GM12878 (cell line): ENCODE measurements at regions of chr19 and their contacts with region 1.

Region 1: GRCh38 chr19:43749152-43749907 is 5.4 kb downstream of the SMG9 start:
- DNase-seq: no peak
- ATAC-seq: no peak
- H3K4me3 ChIP-seq: 0 out of 2 replicates have a peak overlapping the region, but pooled peaks have one; percentile 18
- H3K27ac ChIP-seq: peak overlapping the region; percentile 87
- H3K4me1 ChIP-seq: peaks cover 49% of the 10 kb centered on the region
- H3K27me3 ChIP-seq: no peaks in the 10 kb centered on the region
- CTCF ChIP-seq: no peak
- EP300 ChIP-seq: no peak
- POLR2A ChIP-seq: no peak
- RAD21 ChIP-seq: no peak

Region 2: DNA sequence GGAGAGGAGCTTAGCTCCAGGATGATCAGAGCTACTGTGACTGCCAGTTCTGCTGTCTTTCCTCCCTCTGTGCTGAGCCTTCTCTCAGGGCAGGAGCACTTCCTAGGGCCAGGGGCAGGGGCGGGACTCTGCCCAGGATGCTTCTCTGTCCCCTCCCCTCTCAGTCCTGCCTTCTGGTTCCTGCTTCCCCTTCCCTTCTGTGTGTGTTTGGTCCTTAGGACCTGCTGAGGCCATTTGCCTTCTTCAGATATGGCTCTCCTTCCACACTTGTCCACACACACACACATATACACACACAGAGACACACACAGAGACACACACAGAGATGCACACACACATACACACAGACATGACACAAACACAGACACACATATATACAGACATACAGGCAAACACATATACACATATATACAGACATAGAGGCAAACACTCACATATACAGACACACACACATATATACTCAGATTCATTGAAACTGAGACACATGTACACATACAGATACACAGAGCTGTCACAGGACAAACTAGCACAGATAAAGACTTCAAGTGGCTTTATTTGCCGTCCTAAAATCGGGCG is 417.8 kb before region 1 on chr19:
- CTCF ChIA-PET with region 1: no interaction called
- POLR2A ChIA-PET with region 1: no interaction called
- RAD21 ChIA-PET with region 1: no interaction called
- SMC1A ChIA-PET with region 1: no interaction called
- in situ Hi-C with region 1: no loop called
- intact Hi-C with region 1: no loop called
- DNase-seq: no peak
- ATAC-seq: no peak
- H3K4me3 ChIP-seq: no peak overlapping the region
- H3K27ac ChIP-seq: no peak overlapping the region
- H3K4me1 ChIP-seq: no peaks in the 10 kb centered on the region
- H3K27me3 ChIP-seq: no peaks in the 10 kb centered on the region
- CTCF ChIP-seq: no peak
- EP300 ChIP-seq: no peak
- POLR2A ChIP-seq: no peak
- RAD21 ChIP-seq: no peak

Region 3: DNA sequence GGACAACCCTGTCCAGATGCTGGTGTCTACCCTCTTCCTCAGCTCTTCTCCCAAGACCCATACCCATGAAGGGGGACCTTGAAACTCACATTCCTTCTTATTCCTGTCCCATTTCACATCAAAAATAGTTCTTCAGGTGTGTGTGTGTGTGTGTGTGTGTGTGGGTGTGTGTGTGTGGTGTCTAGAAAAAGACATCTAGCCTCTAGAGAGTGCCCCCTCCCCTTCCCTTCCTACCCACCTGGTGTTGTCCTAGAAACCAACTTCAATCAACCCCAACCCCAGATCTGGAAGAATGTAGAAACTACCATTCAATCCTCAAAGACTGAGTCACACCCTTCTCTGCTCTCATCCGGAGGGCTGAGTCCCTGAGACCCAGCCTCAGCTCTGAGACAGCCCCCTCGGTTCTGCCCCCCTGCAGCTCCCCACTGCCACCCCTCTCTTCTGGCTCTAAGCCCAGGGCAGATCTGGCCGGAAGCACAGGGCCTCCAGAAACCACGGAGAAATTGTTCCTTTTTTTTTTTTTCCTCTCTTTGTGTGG is 27.9 kb after region 1 on chr19:
- CTCF ChIA-PET with region 1: interaction called, 324 read pairs
- POLR2A ChIA-PET with region 1: interaction called, 389 read pairs
- RAD21 ChIA-PET with region 1: interaction called, 118 read pairs
- SMC1A ChIA-PET with region 1: interaction called, 325 read pairs
- in situ Hi-C with region 1: no loop called
- intact Hi-C with region 1: loop called (anchors 1 kb)
- DNase-seq: no peak
- ATAC-seq: peak; percentile 29
- H3K4me3 ChIP-seq: peak overlapping the region; percentile 100
- H3K27ac ChIP-seq: peak overlapping the region; percentile 95
- H3K4me1 ChIP-seq: peaks cover 43% of the 10 kb centered on the region
- H3K27me3 ChIP-seq: no peaks in the 10 kb centered on the region
- CTCF ChIP-seq: no peak
- EP300 ChIP-seq: no peak
- POLR2A ChIP-seq: no peak
- RAD21 ChIP-seq: no peak

Region 4: GRCh38 chr19:43983912-43984686 is 234.8 kb after region 1 on chr19 and contains the start of gene ZNF155:
- CTCF ChIA-PET with region 1: no interaction called
- POLR2A ChIA-PET with region 1: no interaction called
- RAD21 ChIA-PET with region 1: no interaction called
- SMC1A ChIA-PET with region 1: no interaction called
- in situ Hi-C with region 1: no loop called
- intact Hi-C with region 1: no loop called
- DNase-seq: peak; percentile 81
- ATAC-seq: peak; percentile 99
- H3K4me3 ChIP-seq: peak within 1 kb of the TSS; percentile 90
- H3K27ac ChIP-seq: peak within 1 kb of the TSS; percentile 71
- H3K4me1 ChIP-seq: no peaks in the 10 kb centered on the region
- H3K27me3 ChIP-seq: no peaks in the 10 kb centered on the region
- CTCF ChIP-seq: no peak
- EP300 ChIP-seq: no peak
- POLR2A ChIP-seq: peak; percentile 62; the same call in 1 of the 2 replicates
- RAD21 ChIP-seq: no peak
- polyA plus RNA-seq, gene ZNF155: 2.4 to 3.4 TPM